ENCODE measurements at regions of chr1 and their contacts with region 1.

Region 1: GRCh38 chr1:30111431-30111830 is 612.0 kb downstream of the MATN1 start:
- DNase-seq: peak; percentile 60
- ATAC-seq: peak; percentile 77 to 79

Region 2: GRCh38 chr1:29235955-29236684 is 875.3 kb before region 1 on chr1 and contains the start of gene PTPRU:
- intact Hi-C with region 1: loop called (anchors 5 kb)
- DNase-seq: peak; percentile 87
- ATAC-seq: peak; percentile 86 to 88
- total RNA-seq, gene PTPRU: 13.6 to 18.2 TPM

Region 3: DNA sequence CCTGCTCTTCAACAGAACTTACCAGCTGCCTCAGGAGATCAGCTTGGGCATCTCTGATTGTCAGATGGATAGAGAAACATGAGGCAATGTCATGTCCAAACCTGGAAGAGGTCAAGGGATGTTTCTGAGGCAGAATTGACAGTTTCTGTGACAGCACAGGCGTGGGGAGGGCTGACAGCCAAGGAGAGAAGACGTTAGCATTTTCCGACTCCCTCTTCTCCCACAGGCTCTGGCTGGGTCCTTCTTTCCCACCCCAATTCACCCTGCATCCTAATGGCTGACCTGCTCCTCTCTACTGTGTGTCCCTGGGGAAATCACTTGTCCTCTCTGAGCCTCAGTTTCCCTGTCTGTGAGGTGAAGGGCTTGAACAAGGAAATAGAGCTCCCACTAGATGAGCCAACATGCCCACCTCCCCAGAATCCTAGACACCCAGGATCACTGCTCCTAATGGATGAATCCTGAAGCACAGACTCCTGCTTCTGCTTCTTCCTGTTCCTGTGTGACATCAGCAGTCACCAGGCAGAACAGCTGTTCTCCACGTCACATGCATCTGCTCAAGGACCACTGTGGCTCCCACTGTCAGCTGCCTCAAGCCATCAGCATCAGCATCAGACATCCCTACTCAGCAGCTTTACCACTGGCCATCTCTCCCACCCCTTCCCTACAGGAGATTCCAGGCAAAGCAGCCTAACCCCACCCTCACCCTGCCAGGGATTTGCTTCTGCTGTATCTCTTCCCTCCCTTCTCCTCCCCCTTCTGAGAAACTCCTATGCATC is 203.9 kb after region 1 on chr1:
- intact Hi-C with region 1: no loop called
- DNase-seq: no peak
- ATAC-seq: no peak

Region 4: GRCh38 chr1:30379684-30380624 is 268.5 kb after region 1 on chr1:
- intact Hi-C with region 1: loop called in 1 of 2 experiments (anchors 10 kb)
- DNase-seq: no peak
- ATAC-seq: peak; percentile 76 to 79

Measured in left cardiac atrium (tissue), 4 donors.